CD8-positive, alpha-beta memory T cell (primary cell): ENCODE measurements at regions of chr5 and their contacts with region 1.

Region 1: GRCh38 chr5:14706615-14707021 is 42.1 kb downstream of the OTULIN start:
- DNase-seq: peak in 3 of 5 donors; percentile 10 to 83 (median 65)
- H3K4me3 ChIP-seq: peak overlapping the region; percentile 10
- H3K4me3 Mint-ChIP-seq: peak overlapping the region in 6 of 7 donors; percentile 65 to 84 (median 79)
- H3K27ac ChIP-seq: peak overlapping the region; percentile 36
- H3K27ac Mint-ChIP-seq: peak overlapping the region; percentile 92 to 100 (median 98)
- H3K4me1 ChIP-seq: peaks cover 80% of the 10 kb centered on the region
- H3K4me1 Mint-ChIP-seq: peaks cover 75 to 88% (median 84%) of the 10 kb centered on the region in 3 donors
- H3K27me3 ChIP-seq: no peaks in the 10 kb centered on the region
- H3K27me3 Mint-ChIP-seq: no peaks in the 10 kb centered on the region

Region 2: GRCh38 chr5:14440582-14441431 is 265.8 kb before region 1 on chr5:
- CTCF ChIA-PET with region 1: no interaction called
- POLR2A ChIA-PET with region 1: no interaction called
- DNase-seq: no peak
- H3K4me3 ChIP-seq: no peak overlapping the region
- H3K4me3 Mint-ChIP-seq: no peak overlapping the region
- H3K27ac ChIP-seq: no peak overlapping the region
- H3K27ac Mint-ChIP-seq: no peak overlapping the region
- H3K4me1 ChIP-seq: no peaks in the 10 kb centered on the region
- H3K4me1 Mint-ChIP-seq: peaks cover 0 to 11% (median 5%) of the 10 kb centered on the region in 3 donors
- H3K27me3 ChIP-seq: no peaks in the 10 kb centered on the region
- H3K27me3 Mint-ChIP-seq: peaks cover 4 to 22% of the 10 kb centered on the region in 2 donors

Region 3: DNA sequence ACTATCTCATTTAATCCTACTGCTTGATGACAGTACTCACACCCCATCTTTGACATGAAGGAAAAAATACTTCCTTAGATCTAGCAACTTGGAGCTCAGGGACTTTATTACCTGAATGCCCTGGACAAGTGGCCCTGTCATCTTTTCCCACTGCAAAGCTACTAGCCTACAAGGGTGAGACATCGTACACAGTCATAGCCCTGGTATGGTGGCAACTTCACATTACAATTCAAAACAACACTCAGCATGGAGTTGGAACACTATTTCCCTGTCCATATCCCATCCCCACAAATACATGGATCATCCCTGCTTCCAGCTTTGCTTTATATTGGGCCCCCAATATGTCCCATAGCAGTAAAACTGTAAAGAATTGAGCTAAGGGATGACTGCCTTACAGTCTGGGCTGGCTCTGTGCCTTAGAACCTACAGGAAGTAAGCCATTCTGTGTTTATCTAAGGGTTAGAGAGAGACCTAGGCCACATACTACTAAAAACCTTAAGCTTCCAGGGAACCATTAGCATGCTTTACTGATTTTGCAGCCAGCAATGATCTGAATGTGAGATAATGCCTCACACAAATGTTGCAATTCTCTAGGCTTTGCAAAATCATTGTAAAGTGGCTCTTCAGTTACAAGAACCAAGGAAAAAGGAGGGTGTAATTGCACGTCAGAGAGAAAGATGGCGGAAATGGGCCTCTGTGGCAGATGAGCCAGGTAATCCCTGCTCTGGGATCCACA is 13.8 kb after region 1 on chr5:
- CTCF ChIA-PET with region 1: interaction called, 32 read pairs
- POLR2A ChIA-PET with region 1: interaction called, 4 read pairs
- DNase-seq: no peak
- H3K4me3 ChIP-seq: no peak overlapping the region
- H3K4me3 Mint-ChIP-seq: no peak overlapping the region
- H3K27ac ChIP-seq: no peak overlapping the region
- H3K27ac Mint-ChIP-seq: peak overlapping the region in 7 of 8 donors; percentile 3 to 55 (median 33)
- H3K4me1 ChIP-seq: peaks cover 14% of the 10 kb centered on the region
- H3K4me1 Mint-ChIP-seq: peaks cover 17 to 36% (median 24%) of the 10 kb centered on the region in 3 donors
- H3K27me3 ChIP-seq: no peaks in the 10 kb centered on the region
- H3K27me3 Mint-ChIP-seq: no peaks in the 10 kb centered on the region